ENCODE measurements at regions of chr9 and their contacts with region 1.

Region 1: GRCh38 chr9:21334701-21335632 is at the start of gene KLHL9:
- DNase-seq: peak; percentile 73
- ATAC-seq: peak; percentile 89
- H3K4me3 ChIP-seq: peak within 1 kb of the TSS; percentile 82
- H3K27ac ChIP-seq: peak within 1 kb of the TSS; percentile 91
- H3K4me1 ChIP-seq: peaks cover 3% of the 10 kb centered on the region
- H3K27me3 ChIP-seq: no peaks in the 10 kb centered on the region
- CTCF ChIP-seq: no peak
- EP300 ChIP-seq: no peak
- POLR2A ChIP-seq: peak; percentile 91
- RAD21 ChIP-seq: no peak
- polyA plus RNA-seq, gene KLHL9: 3.8 to 5.8 TPM

Region 2: DNA sequence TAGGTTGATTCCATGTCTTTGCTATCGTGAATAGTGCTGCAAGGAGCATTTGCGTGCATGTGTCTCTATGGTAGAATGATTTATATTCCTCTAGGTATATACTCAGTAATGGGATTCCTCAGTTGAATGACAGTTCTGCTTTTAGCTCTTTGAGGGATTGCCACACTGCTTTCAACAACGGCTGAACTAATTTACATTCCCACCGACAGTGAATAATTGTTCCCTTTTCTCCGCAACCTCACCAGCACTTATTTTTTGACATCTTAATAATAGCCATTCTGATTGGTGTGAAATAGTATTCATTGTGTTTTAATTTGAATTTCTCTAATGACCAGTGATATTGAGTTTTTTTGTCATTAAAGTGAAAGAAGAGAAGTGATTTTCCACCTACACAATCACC is 48.3 kb before region 1 on chr9:
- CTCF ChIA-PET with region 1: no interaction called
- POLR2A ChIA-PET with region 1: no interaction called
- RAD21 ChIA-PET with region 1: no interaction called
- SMC1A ChIA-PET with region 1: no interaction called
- in situ Hi-C with region 1: no loop called
- intact Hi-C with region 1: no loop called
- DNase-seq: no peak
- ATAC-seq: no peak
- H3K4me3 ChIP-seq: no peak overlapping the region
- H3K27ac ChIP-seq: no peak overlapping the region
- H3K4me1 ChIP-seq: no peaks in the 10 kb centered on the region
- H3K27me3 ChIP-seq: no peaks in the 10 kb centered on the region
- CTCF ChIP-seq: no peak
- EP300 ChIP-seq: no peak
- POLR2A ChIP-seq: no peak
- RAD21 ChIP-seq: no peak

Region 3: GRCh38 chr9:21357479-21358460 is 22.8 kb after region 1 on chr9:
- CTCF ChIA-PET with region 1: interaction called, 13 read pairs
- POLR2A ChIA-PET with region 1: interaction called, 7 read pairs
- RAD21 ChIA-PET with region 1: interaction called, 22 read pairs
- SMC1A ChIA-PET with region 1: interaction called, 31 read pairs
- in situ Hi-C with region 1: no loop called
- intact Hi-C with region 1: loop called (anchors 2 kb)
- DNase-seq: peak; percentile 76
- ATAC-seq: peak; percentile 94
- H3K4me3 ChIP-seq: no peak overlapping the region
- H3K27ac ChIP-seq: peak overlapping the region; percentile 45; the same call in 1 of the 2 replicates
- H3K4me1 ChIP-seq: peaks cover 18% of the 10 kb centered on the region; the same call in 1 of the 2 replicates
- H3K27me3 ChIP-seq: no peaks in the 10 kb centered on the region
- CTCF ChIP-seq: no peak
- EP300 ChIP-seq: peak in 1 of 2 experiments; percentile 62; a peak in 1 of 4 replicates
- POLR2A ChIP-seq: no peak
- RAD21 ChIP-seq: no peak

Region 4: GRCh38 chr9:21395778-21396717 is 61.1 kb after region 1 on chr9:
- CTCF ChIA-PET with region 1: interaction called, 256 read pairs
- POLR2A ChIA-PET with region 1: interaction called, 3 read pairs
- RAD21 ChIA-PET with region 1: interaction called, 44 read pairs
- SMC1A ChIA-PET with region 1: interaction called, 205 read pairs
- in situ Hi-C with region 1: loop called (anchors 5 kb)
- intact Hi-C with region 1: no loop called
- DNase-seq: no peak
- ATAC-seq: peak; percentile 82
- H3K4me3 ChIP-seq: peak overlapping the region; percentile 68
- H3K27ac ChIP-seq: no peak overlapping the region
- H3K4me1 ChIP-seq: peaks cover 3% of the 10 kb centered on the region; the same call in 1 of the 2 replicates
- H3K27me3 ChIP-seq: no peaks in the 10 kb centered on the region
- CTCF ChIP-seq: peak; percentile 71 to 88 (median 85)
- EP300 ChIP-seq: no peak
- POLR2A ChIP-seq: no peak
- RAD21 ChIP-seq: peak; percentile 57

Region 5: GRCh38 chr9:21413624-21414023 is 78.7 kb after region 1 on chr9:
- CTCF ChIA-PET with region 1: interaction called, 40 read pairs
- POLR2A ChIA-PET with region 1: no interaction called
- RAD21 ChIA-PET with region 1: interaction called, 19 read pairs
- SMC1A ChIA-PET with region 1: interaction called, 22 read pairs
- in situ Hi-C with region 1: no loop called
- intact Hi-C with region 1: no loop called
- DNase-seq: no peak
- ATAC-seq: peak; percentile 96
- H3K4me3 ChIP-seq: no peak overlapping the region
- H3K27ac ChIP-seq: no peak overlapping the region
- H3K4me1 ChIP-seq: peaks cover 6% of the 10 kb centered on the region; the same call in 1 of the 2 replicates
- H3K27me3 ChIP-seq: no peaks in the 10 kb centered on the region; a peak in 1 of 4 replicates
- CTCF ChIP-seq: peak; percentile 50 to 70 (median 69); a peak in 5 of 6 replicates
- EP300 ChIP-seq: no peak
- POLR2A ChIP-seq: no peak
- RAD21 ChIP-seq: peak; percentile 55

Region 6: DNA sequence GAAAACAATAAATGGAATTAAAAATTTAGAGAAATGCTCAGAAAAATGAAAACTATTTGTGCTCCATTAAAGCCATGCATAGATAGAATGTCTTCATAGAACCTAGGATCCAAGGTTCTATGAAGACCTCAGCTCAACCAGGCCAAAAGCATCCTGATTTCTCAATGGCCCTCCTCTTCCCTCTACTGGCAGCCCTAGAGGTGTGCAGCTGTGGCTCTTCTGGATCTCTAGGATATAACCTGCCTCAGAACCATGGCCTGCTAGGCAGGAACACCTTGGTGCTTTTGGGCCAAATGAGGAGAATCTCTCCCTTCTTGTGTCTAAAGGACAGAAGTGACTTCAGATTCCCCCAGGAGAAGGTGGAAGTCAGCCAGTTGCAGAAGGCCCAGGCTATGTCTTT is 120.4 kb after region 1 on chr9:
- CTCF ChIA-PET with region 1: interaction called, 7 read pairs
- POLR2A ChIA-PET with region 1: no interaction called
- RAD21 ChIA-PET with region 1: interaction called, 8 read pairs
- SMC1A ChIA-PET with region 1: interaction called, 12 read pairs
- in situ Hi-C with region 1: no loop called
- intact Hi-C with region 1: no loop called
- DNase-seq: no peak
- ATAC-seq: peak; percentile 98
- H3K4me3 ChIP-seq: no peak overlapping the region
- H3K27ac ChIP-seq: no peak overlapping the region
- H3K4me1 ChIP-seq: no peaks in the 10 kb centered on the region
- H3K27me3 ChIP-seq: 0 out of 4 replicates have a peak, but pooled peaks cover 0 to 2% of the 10 kb centered on the region in 2 experiments
- CTCF ChIP-seq: peak; percentile 81 to 87 (median 86)
- EP300 ChIP-seq: no peak
- POLR2A ChIP-seq: no peak
- RAD21 ChIP-seq: peak; percentile 89

Region 7: GRCh38 chr9:21527579-21527978 is 192.6 kb after region 1 on chr9:
- CTCF ChIA-PET with region 1: no interaction called
- POLR2A ChIA-PET with region 1: no interaction called
- RAD21 ChIA-PET with region 1: no interaction called
- SMC1A ChIA-PET with region 1: no interaction called
- in situ Hi-C with region 1: no loop called
- intact Hi-C with region 1: no loop called
- DNase-seq: no peak
- ATAC-seq: peak; percentile 62
- H3K4me3 ChIP-seq: no peak overlapping the region
- H3K27ac ChIP-seq: no peak overlapping the region
- H3K4me1 ChIP-seq: no peaks in the 10 kb centered on the region
- H3K27me3 ChIP-seq: no peaks in the 10 kb centered on the region
- CTCF ChIP-seq: no peak
- EP300 ChIP-seq: no peak
- POLR2A ChIP-seq: no peak
- RAD21 ChIP-seq: no peak

Measured in GM12878 (cell line).